CD14-positive monocyte (primary cell): ENCODE measurements at regions of chr10 and their contacts with region 1.

Region 1: DNA sequence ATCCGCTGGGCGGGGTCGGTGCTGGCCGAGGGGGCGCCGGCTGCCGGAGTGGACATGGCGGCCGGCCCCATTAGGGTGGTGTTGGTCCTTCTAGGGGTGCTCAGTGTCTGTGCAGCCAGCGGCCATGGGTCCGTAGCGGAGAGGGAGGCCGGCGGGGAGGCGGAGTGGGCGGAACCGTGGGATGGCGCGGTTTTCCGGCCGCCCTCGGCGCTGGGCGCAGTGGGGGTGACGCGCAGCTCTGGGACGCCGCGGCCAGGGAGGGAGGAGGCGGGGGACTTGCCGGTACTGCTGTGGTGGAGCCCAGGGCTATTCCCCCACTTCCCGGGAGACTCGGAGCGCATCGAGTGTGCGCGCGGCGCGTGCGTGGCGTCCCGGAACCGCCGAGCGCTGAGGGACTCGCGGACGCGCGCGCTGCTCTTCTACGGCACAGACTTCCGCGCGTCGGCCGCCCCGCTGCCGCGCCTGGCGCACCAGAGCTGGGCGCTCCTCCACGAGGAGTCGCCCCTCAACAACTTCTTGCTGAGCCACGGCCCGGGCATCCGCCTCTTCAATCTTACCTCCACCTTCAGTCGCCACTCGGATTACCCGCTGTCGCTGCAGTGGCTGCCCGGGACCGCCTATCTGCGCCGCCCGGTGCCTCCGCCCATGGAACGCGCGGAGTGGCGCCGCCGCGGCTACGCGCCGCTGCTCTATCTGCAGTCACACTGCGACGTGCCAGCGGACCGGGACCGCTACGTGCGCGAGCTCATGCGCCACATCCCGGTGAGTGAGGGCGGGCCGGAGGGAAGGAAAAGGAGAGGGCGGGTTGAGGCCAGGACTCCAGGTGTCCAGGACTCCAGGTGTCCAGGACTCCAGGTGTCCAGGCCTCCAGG is 9.3 kb upstream of the CHCHD1 start:
- DNase-seq: peak; percentile 69 to 85 (median 77)
- H3K4me3 ChIP-seq: peak overlapping the region; percentile 71 to 91 (median 89)
- H3K4me3 Mint-ChIP-seq: peak overlapping the region; percentile 87 to 96
- H3K27ac ChIP-seq: peak overlapping the region; percentile 80 to 85
- H3K27ac Mint-ChIP-seq: peak overlapping the region; percentile 90 to 95 (median 94)
- H3K4me1 ChIP-seq: peaks cover 34 to 42% of the 10 kb centered on the region in 2 donors
- H3K4me1 Mint-ChIP-seq: peaks cover 42% of the 10 kb centered on the region
- H3K27me3 ChIP-seq: no peaks in the 10 kb centered on the region
- H3K27me3 Mint-ChIP-seq: no peaks in the 10 kb centered on the region
- CTCF ChIP-seq: no peak

Region 2: DNA sequence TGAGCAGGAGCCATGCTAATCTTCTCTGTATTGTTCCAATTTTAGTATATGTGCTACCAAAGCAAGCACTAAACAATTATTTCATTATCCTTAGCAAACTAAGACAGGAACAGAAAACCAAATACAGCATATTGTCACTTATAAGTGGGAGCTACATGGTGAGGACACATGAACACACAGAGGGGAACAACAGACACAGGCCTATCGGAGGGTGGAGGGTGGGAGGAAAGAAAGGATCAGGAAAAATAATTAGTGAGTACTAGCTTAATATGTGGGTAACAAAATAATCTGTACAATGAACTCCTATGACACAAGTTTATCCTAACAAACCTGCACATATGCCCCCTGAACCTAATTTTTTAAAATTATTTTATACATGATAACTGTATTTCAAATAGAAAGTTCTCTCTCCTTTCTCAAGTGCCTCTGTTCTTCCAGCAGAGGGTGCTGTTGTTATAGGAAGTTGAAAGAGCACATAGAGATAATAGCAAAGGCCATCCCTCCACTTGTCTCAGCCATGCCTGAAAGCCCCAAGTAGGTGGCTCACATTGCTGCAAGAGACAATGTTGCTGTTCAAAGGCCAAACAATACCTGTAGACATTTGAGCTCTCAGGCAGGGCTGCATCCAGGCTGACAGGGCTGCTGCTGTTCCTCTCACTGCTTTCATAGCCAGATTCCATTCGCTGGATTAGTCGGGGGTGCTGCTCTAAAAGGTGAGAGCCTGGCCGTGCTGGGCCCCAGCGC is 243.3 kb before region 1 on chr10:
- intact Hi-C with region 1: no loop called
- DNase-seq: peak; percentile 45 to 67 (median 65)
- H3K4me3 ChIP-seq: no peak overlapping the region
- H3K4me3 Mint-ChIP-seq: no peak overlapping the region
- H3K27ac ChIP-seq: no peak overlapping the region
- H3K27ac Mint-ChIP-seq: peak overlapping the region in 1 of 7 donors; percentile 33
- H3K4me1 ChIP-seq: no peaks in the 10 kb centered on the region
- H3K4me1 Mint-ChIP-seq: no peaks in the 10 kb centered on the region
- H3K27me3 ChIP-seq: no peaks in the 10 kb centered on the region
- H3K27me3 Mint-ChIP-seq: no peaks in the 10 kb centered on the region
- CTCF ChIP-seq: peak; percentile 83

Region 3: GRCh38 chr10:73730153-73730906 is 42.2 kb before region 1 on chr10:
- intact Hi-C with region 1: loop called in 1 of 2 experiments (anchors 2 kb)
- DNase-seq: peak; percentile 78 to 82 (median 79)
- H3K4me3 ChIP-seq: peak overlapping the region; percentile 87 to 99 (median 92)
- H3K4me3 Mint-ChIP-seq: peak overlapping the region; percentile 98 to 99
- H3K27ac ChIP-seq: peak overlapping the region; percentile 82 to 92
- H3K27ac Mint-ChIP-seq: peak overlapping the region; percentile 97 to 99 (median 98)
- H3K4me1 ChIP-seq: peaks cover 5 to 11% of the 10 kb centered on the region in 2 donors
- H3K4me1 Mint-ChIP-seq: peaks cover 8% of the 10 kb centered on the region
- H3K27me3 ChIP-seq: no peaks in the 10 kb centered on the region
- H3K27me3 Mint-ChIP-seq: peaks cover 0 to 1% (median 0%) of the 10 kb centered on the region in 3 donors
- CTCF ChIP-seq: no peak

Region 4: GRCh38 chr10:74371696-74372095 is 599.2 kb after region 1 on chr10:
- intact Hi-C with region 1: no loop called
- DNase-seq: no peak
- H3K4me3 ChIP-seq: no peak overlapping the region
- H3K4me3 Mint-ChIP-seq: no peak overlapping the region
- H3K27ac ChIP-seq: no peak overlapping the region
- H3K27ac Mint-ChIP-seq: peak overlapping the region in 2 of 7 donors; percentile 12 to 79
- H3K4me1 ChIP-seq: no peaks in the 10 kb centered on the region
- H3K4me1 Mint-ChIP-seq: no peaks in the 10 kb centered on the region
- H3K27me3 ChIP-seq: no peaks in the 10 kb centered on the region
- H3K27me3 Mint-ChIP-seq: no peaks in the 10 kb centered on the region
- CTCF ChIP-seq: no peak